AG04450 (cell line): ENCODE measurements at regions of chr3 and their contacts with region 1.

Region 1: GRCh38 chr3:17841190-17841828 is 98.9 kb upstream of the TBC1D5 start:
- DNase-seq: peak; percentile 27
- H3K4me3 ChIP-seq: no peak overlapping the region
- H3K27ac ChIP-seq: no peak overlapping the region
- H3K27me3 ChIP-seq: no peaks in the 10 kb centered on the region
- CTCF ChIP-seq: peak; percentile 99

Region 2: GRCh38 chr3:17258823-17259436 is 582.4 kb before region 1 on chr3:
- CTCF ChIA-PET with region 1: interaction called, 27 read pairs
- POLR2A ChIA-PET with region 1: no interaction called
- DNase-seq: peak; percentile 6
- H3K4me3 ChIP-seq: no peak overlapping the region
- H3K27ac ChIP-seq: no peak overlapping the region
- H3K27me3 ChIP-seq: no peaks in the 10 kb centered on the region
- CTCF ChIP-seq: peak; percentile 77

Region 3: DNA sequence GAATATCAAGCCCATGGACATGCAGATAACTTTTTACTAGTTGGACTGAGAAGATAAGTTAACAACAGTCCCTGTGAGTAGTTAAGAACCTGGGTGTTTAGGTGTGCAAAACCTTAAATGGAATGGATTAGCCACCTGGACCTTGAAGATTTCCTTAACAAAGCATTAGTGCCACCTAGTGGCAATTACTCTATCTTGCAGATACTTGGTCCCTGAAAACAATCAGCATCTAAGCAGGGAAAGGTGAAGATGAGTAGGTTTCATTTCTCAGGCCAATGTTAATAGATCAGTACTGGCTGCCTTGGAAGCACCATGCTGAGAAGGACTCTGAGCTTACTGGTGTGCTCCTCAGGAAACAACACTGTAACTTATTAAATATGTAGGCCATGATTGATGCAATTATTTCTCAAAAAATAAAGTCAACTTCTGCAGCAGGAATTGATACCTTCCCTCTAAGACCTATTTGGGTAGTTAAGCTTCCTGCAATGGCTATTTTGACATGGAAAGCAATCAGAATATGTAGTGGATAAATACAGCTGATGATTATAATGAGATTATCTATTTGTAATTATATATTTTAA is 428.3 kb before region 1 on chr3:
- CTCF ChIA-PET with region 1: interaction called, 42 read pairs
- POLR2A ChIA-PET with region 1: no interaction called
- DNase-seq: peak; percentile 21
- H3K4me3 ChIP-seq: no peak overlapping the region
- H3K27ac ChIP-seq: no peak overlapping the region
- H3K27me3 ChIP-seq: no peaks in the 10 kb centered on the region
- CTCF ChIP-seq: peak; percentile 86

Region 4: GRCh38 chr3:17431004-17431403 is 410.3 kb before region 1 on chr3:
- CTCF ChIA-PET with region 1: interaction called, 95 read pairs
- POLR2A ChIA-PET with region 1: no interaction called
- DNase-seq: peak; percentile 3
- H3K4me3 ChIP-seq: no peak overlapping the region
- H3K27ac ChIP-seq: no peak overlapping the region
- H3K27me3 ChIP-seq: no peaks in the 10 kb centered on the region
- CTCF ChIP-seq: peak; percentile 51

Region 5: DNA sequence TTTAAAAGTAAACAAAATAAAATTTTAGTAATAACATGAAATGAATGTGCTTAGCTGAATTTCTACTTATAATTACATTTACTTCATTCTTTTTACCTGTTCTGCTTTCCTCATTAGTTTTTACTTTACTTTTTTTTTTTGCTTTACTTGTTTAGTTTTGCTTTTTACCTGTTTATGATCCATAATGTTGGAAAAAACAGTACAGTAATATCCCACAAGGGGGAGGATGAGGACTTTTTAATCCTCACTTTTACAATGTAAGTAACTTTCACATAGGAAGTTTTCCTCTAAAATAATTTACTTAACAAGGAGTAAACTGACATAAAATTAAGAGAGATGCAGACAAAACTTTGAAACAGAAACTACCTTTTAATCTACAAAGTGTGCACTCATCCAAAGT is 367.5 kb before region 1 on chr3:
- CTCF ChIA-PET with region 1: interaction called, 38 read pairs
- POLR2A ChIA-PET with region 1: no interaction called
- DNase-seq: no peak
- H3K4me3 ChIP-seq: no peak overlapping the region
- H3K27ac ChIP-seq: no peak overlapping the region
- H3K27me3 ChIP-seq: no peaks in the 10 kb centered on the region
- CTCF ChIP-seq: peak; percentile 42

Region 6: GRCh38 chr3:17645072-17645698 is 196.1 kb before region 1 on chr3:
- CTCF ChIA-PET with region 1: interaction called, 52 read pairs
- POLR2A ChIA-PET with region 1: no interaction called
- DNase-seq: peak; percentile 36
- H3K4me3 ChIP-seq: no peak overlapping the region
- H3K27ac ChIP-seq: no peak overlapping the region
- H3K27me3 ChIP-seq: no peaks in the 10 kb centered on the region
- CTCF ChIP-seq: peak; percentile 83

Region 7: DNA sequence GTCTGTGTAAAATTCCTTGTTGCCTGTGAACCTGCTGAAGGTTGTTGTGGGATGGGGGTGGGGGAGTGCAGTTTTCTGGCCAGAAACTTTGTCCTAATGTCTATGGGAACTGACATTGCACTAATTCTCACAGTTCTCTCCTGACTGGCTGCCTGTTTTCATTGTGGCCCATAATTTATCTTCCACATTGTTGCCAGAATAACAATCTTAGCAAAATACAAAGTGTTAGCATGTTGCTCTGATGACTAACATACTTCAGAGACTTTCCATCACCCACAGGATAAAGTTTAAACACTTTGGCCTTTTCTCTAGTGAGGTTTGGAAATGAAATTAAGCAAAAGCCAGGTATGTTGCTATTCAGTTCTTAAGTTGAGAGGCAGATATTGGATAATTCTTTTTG is 17.5 kb before region 1 on chr3:
- CTCF ChIA-PET with region 1: interaction called, 16 read pairs
- POLR2A ChIA-PET with region 1: no interaction called
- DNase-seq: no peak
- H3K4me3 ChIP-seq: no peak overlapping the region
- H3K27ac ChIP-seq: no peak overlapping the region
- H3K27me3 ChIP-seq: no peaks in the 10 kb centered on the region
- CTCF ChIP-seq: no peak